Activated CD8-positive, alpha-beta memory T cell treated with anti-CD3 and anti-CD28 coated beads, Interleukin-2, amount 10 ng/mL, durations not matched to agents 7 days and 5 days (primary cell): ENCODE measurements at regions of chr19 and their contacts with region 1.

Region 1: GRCh38 chr19:2610637-2611482 is 91.6 kb downstream of the GNG7 start:
- DNase-seq: peak; percentile 91
- ATAC-seq: peak; percentile 86
- H3K4me3 Mint-ChIP-seq: peak overlapping the region; percentile 77
- H3K27ac Mint-ChIP-seq: no peak overlapping the region
- H3K4me1 Mint-ChIP-seq: peaks cover 47% of the 10 kb centered on the region
- H3K27me3 Mint-ChIP-seq: peaks cover 33% of the 10 kb centered on the region

Region 2: GRCh38 chr19:2427429-2428320 is 183.2 kb before region 1 on chr19 and contains the start of gene TIMM13:
- CTCF ChIA-PET with region 1: interaction called, 15 read pairs
- DNase-seq: peak; percentile 97
- ATAC-seq: peak; percentile 94
- H3K4me3 Mint-ChIP-seq: peak within 1 kb of the TSS; percentile 85
- H3K27ac Mint-ChIP-seq: peak within 1 kb of the TSS; percentile 89
- H3K4me1 Mint-ChIP-seq: peaks cover 12% of the 10 kb centered on the region
- H3K27me3 Mint-ChIP-seq: no peaks in the 10 kb centered on the region
- total RNA-seq, gene TIMM13: 66.4 to 91.9 TPM

Region 3: GRCh38 chr19:2461751-2462634 is 148.9 kb before region 1 on chr19:
- CTCF ChIA-PET with region 1: interaction called, 28 read pairs
- DNase-seq: peak; percentile 85
- ATAC-seq: peak; percentile 86
- H3K4me3 Mint-ChIP-seq: peak overlapping the region; percentile 89
- H3K27ac Mint-ChIP-seq: peak overlapping the region; percentile 89
- H3K4me1 Mint-ChIP-seq: peaks cover 15% of the 10 kb centered on the region
- H3K27me3 Mint-ChIP-seq: no peaks in the 10 kb centered on the region

Region 4: GRCh38 chr19:2552859-2553258 is 58.0 kb before region 1 on chr19:
- CTCF ChIA-PET with region 1: interaction called, 11 read pairs
- DNase-seq: peak; percentile 83
- ATAC-seq: peak; percentile 90
- H3K4me3 Mint-ChIP-seq: peak overlapping the region; percentile 66
- H3K27ac Mint-ChIP-seq: peak overlapping the region; percentile 93
- H3K4me1 Mint-ChIP-seq: peaks cover 31% of the 10 kb centered on the region
- H3K27me3 Mint-ChIP-seq: no peaks in the 10 kb centered on the region

Region 5: DNA sequence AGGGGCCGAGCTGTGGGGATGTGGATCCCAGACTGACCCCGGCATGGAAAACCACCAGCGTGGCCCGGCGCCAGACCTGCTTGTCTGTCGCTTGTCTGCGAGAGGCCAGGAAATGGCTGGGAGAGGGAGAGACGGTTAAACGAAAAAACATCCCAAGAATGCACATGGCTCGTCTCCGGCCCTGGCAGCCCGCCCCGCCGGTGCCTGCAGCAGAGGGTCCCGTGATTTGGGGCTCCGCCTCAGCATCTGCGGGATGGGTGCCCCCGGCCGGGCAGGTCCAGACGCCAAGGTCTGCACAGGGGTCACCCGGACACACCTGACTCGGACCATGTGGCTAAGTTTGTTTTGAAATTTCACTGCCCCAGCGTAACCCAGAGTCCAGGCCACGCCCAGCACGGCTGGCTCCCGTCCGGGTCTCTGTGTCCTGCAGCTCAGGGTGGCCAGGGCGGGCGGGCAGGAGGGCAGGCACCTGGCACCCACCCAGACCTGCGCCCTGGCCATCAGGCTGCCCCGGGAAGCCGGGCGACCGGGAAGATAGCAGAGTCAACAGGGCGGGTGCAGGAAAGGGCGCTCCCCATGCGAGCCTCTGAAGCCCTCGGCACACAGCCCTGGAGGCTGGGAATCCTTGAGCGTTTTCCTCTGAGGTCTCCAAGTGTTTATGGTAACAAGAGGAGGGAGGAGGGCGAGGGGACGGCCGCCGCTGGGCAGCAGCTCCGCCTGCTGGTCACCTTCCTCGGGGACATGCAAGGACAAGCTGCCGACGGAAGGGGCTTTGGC is 31.8 kb before region 1 on chr19:
- CTCF ChIA-PET with region 1: interaction called, 22 read pairs
- DNase-seq: peak; percentile 83
- ATAC-seq: peak; percentile 79
- H3K4me3 Mint-ChIP-seq: no peak overlapping the region
- H3K27ac Mint-ChIP-seq: no peak overlapping the region
- H3K4me1 Mint-ChIP-seq: peaks cover 2% of the 10 kb centered on the region
- H3K27me3 Mint-ChIP-seq: peaks cover 23% of the 10 kb centered on the region